Activated T-helper 2 cell treated with anti-CD3 and anti-CD28 coated beads, Interferon-gamma antibody, Interleukin-2, Interleukin-4, amounts not matched to agents 10 μg/mL and 5 μg/mL and 100 μg/mL, durations not matched to agents 14 hours and 24 hours and 36 hours (primary cell): ENCODE measurements at regions of chr22 and their contacts with region 1.

Region 1: GRCh38 chr22:40436505-40437451 is 66.4 kb downstream of the SGSM3 start:
- DNase-seq: no peak
- H3K4me3 Mint-ChIP-seq: peak overlapping the region; percentile 7
- H3K27ac Mint-ChIP-seq: peak overlapping the region; percentile 74
- H3K4me1 Mint-ChIP-seq: peaks cover 43% of the 10 kb centered on the region
- H3K27me3 Mint-ChIP-seq: no peaks in the 10 kb centered on the region

Region 2: GRCh38 chr22:40452730-40453493 is 16.1 kb after region 1 on chr22:
- intact Hi-C with region 1: no loop called
- DNase-seq: no peak
- H3K4me3 Mint-ChIP-seq: no peak overlapping the region
- H3K27ac Mint-ChIP-seq: no peak overlapping the region
- H3K4me1 Mint-ChIP-seq: peaks cover 47% of the 10 kb centered on the region
- H3K27me3 Mint-ChIP-seq: no peaks in the 10 kb centered on the region

Region 3: GRCh38 chr22:40479126-40479800 is 42.5 kb after region 1 on chr22:
- intact Hi-C with region 1: loop called (anchors 2 kb)
- DNase-seq: no peak
- H3K4me3 Mint-ChIP-seq: no peak overlapping the region
- H3K27ac Mint-ChIP-seq: no peak overlapping the region
- H3K4me1 Mint-ChIP-seq: peaks cover 28% of the 10 kb centered on the region
- H3K27me3 Mint-ChIP-seq: no peaks in the 10 kb centered on the region

Region 4: GRCh38 chr22:40487663-40488249 is 51.0 kb after region 1 on chr22:
- intact Hi-C with region 1: loop called (anchors 1 kb)
- DNase-seq: no peak
- H3K4me3 Mint-ChIP-seq: no peak overlapping the region
- H3K27ac Mint-ChIP-seq: no peak overlapping the region
- H3K4me1 Mint-ChIP-seq: peaks cover 25% of the 10 kb centered on the region
- H3K27me3 Mint-ChIP-seq: no peaks in the 10 kb centered on the region

Region 5: DNA sequence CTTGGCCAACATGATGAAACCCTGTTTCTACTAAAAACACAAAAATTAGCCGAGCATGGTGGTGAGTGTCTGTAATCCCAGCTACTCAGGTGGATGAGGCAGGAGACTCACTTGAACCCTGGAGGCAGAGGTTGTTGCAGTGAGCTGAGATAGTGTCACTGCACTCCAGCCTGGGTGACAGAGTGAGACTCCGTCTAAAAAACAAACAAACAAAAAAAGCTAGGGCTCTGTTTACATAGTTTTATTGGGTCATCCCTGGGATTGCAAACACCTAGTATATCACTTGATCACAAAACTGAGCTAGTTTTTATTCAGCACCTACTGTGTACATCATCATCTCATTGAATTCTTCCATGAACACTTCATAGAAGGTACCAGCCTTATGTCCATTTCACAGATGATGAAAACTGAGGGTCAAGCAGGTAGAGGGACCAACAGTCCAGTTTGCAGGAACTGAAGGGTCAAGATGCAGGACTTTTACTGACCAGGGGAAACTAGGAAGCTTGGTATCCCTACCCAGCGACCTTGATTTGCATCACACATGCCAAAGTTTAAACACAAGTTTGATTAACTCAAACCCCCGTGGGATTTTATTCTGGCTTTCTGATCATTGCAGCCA is 208.9 kb after region 1 on chr22:
- intact Hi-C with region 1: loop called (anchors 2 kb)
- DNase-seq: no peak
- H3K4me3 Mint-ChIP-seq: no peak overlapping the region
- H3K27ac Mint-ChIP-seq: no peak overlapping the region
- H3K4me1 Mint-ChIP-seq: peaks cover 6% of the 10 kb centered on the region
- H3K27me3 Mint-ChIP-seq: no peaks in the 10 kb centered on the region